Adrenal gland (tissue), 19 donors: ENCODE measurements at regions of chr20 and their contacts with region 1.

Region 1: DNA sequence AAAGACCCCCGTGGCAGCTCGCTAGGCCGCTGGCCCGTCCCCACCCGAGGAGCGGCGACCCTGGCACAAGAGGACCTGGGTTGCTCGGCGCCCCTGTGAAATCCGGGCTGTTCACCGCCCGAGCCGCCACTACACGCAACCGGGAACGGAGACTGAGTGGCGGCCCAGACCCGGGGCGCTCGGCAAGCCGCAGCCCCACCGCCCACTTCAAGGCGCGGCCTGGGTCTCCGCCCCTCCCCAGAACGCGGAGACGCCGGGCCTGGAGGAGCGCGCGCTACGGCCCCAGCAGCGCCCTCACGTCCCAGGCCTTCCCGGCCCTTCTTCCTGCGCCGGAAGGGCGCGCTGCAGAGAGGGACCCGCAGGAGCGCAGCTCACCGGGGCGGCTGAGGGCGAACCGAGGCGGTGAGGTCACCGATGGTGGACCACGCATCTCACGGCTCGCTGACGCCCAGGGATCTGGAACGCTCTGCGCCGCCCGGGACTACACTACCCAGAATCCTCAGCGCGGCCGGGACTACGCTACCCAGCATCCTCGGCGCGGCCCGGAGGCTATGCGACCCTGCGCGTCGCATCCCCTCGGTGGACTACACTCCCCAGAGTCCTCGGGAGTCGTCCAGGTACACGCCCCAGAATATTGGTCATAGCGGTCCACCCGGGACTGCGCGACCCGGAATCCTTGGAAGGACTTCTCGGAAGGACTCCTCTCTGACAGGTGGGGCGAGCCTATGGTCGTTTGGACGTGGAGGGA is at the start of gene ZNF337:
- DNase-seq: peak; percentile 95 to 98 (median 97)
- H3K4me3 ChIP-seq: peak within 1 kb of the TSS; percentile 85 to 98 (median 95)
- H3K27ac ChIP-seq: peak within 1 kb of the TSS; percentile 71 to 96 (median 91)
- H3K4me1 ChIP-seq: peaks cover 13 to 19% of the 10 kb centered on the region in 2 donors
- H3K27me3 ChIP-seq: no peaks in the 10 kb centered on the region
- CTCF ChIP-seq: peak in 1 of 6 experiments; percentile 31
- POLR2A ChIP-seq: peak; percentile 73 to 89
- total RNA-seq, gene ZNF337: 7.1 to 24.3 (median 10.5) TPM

Region 2: GRCh38 chr20:25294459-25295385 is 401.8 kb before region 1 on chr20:
- intact Hi-C with region 1: no loop called
- DNase-seq: peak in 2 of 7 donors; percentile 48 to 71
- H3K4me3 ChIP-seq: no peak overlapping the region
- H3K27ac ChIP-seq: peak overlapping the region in 4 of 5 donors; percentile 65 to 88 (median 79)
- H3K4me1 ChIP-seq: peaks cover 25 to 28% of the 10 kb centered on the region in 2 donors
- H3K27me3 ChIP-seq: no peaks in the 10 kb centered on the region
- CTCF ChIP-seq: peak; percentile 40 to 68 (median 58)
- POLR2A ChIP-seq: no peak

Region 3: GRCh38 chr20:25623736-25624499 is 72.6 kb before region 1 on chr20 and contains the start of gene NANP:
- intact Hi-C with region 1: loop called in 1 of 2 experiments (anchors 10 kb)
- DNase-seq: peak; percentile 97 to 99 (median 98)
- H3K4me3 ChIP-seq: peak within 1 kb of the TSS; percentile 48 to 100 (median 87)
- H3K27ac ChIP-seq: peak within 1 kb of the TSS; percentile 84 to 96 (median 94)
- H3K4me1 ChIP-seq: peaks cover 17 to 18% of the 10 kb centered on the region in 2 donors
- H3K27me3 ChIP-seq: no peaks in the 10 kb centered on the region
- CTCF ChIP-seq: peak in 2 of 6 experiments; percentile 2 to 5
- POLR2A ChIP-seq: peak; percentile 73 to 87
- total RNA-seq, gene NANP: 5.5 to 13.6 (median 7.8) TPM